ENCODE measurements at regions of chr1 and their contacts with region 1.

Region 1: GRCh38 chr1:202750758-202751157 is 40.5 kb upstream of the SYT2 start:
- DNase-seq: no peak
- H3K4me3 ChIP-seq: no peak overlapping the region
- H3K27ac ChIP-seq: no peak overlapping the region
- H3K4me1 ChIP-seq: no peaks in the 10 kb centered on the region
- H3K27me3 ChIP-seq: no peaks in the 10 kb centered on the region
- CTCF ChIP-seq: peak in 1 of 3 experiments; percentile 24
- EP300 ChIP-seq: no peak
- POLR2A ChIP-seq: no peak

Region 2: DNA sequence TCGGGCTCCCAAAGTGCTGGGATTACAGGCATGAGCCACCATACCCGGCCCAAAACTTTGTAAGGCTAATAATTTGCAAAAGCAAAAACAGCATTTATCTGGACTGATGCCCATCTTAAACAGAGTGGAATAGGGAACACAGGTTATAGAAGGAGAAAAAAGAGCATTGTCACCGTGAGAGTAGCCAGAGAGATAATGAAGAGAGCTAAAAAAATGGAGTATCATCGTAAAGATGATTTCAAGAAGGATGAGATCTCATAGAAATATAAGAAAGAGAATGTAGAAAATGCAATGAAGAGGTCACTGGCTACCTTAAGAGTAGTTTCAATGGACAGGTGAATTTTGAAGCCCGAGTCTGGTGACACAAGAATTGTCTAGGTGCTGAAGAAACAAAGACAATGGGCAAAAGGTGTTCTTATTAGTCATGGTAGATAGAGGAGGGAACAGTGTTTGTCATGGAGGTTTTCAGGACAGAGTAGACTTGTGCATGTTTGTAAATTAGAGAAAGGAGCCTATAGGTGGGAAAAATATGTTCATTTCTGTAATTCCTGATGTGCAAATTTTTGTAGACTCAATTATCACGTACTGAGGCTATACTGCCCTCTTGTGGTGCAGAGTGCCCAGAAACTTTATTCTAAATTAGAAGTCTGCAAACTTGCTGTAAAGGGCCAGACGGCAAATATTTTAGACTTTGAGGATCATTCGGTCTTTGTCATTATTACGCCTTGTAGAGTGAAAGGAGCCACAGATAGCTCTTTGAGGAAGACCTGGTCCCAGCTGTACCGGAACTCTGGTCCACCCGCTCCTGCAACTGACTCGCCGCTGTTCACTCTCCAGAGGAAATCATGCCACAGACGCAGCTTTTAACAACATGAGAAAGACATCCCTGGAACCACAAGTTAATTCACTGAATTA is 248.3 kb after region 1 on chr1:
- intact Hi-C with region 1: loop called (anchors 5 kb)
- DNase-seq: no peak
- H3K4me3 ChIP-seq: no peak overlapping the region
- H3K27ac ChIP-seq: no peak overlapping the region
- H3K4me1 ChIP-seq: peaks cover 0 to 5% (median 2%) of the 10 kb centered on the region in 4 donors
- H3K27me3 ChIP-seq: peaks cover 0 to 12% (median 3%) of the 10 kb centered on the region in 4 donors
- CTCF ChIP-seq: peak; percentile 63 to 83 (median 70)
- EP300 ChIP-seq: no peak
- POLR2A ChIP-seq: no peak

Measured in esophagus muscularis mucosa (tissue), 4 donors.